ENCODE measurements at regions of chr19 and their contacts with region 1.

Region 1: GRCh38 chr19:18401580-18402112 is 4.2 kb upstream of the LRRC25 start:
- DNase-seq: peak; percentile 39 to 85 (median 56)
- ATAC-seq: peak; percentile 94
- H3K4me3 ChIP-seq: no peak overlapping the region
- H3K27ac ChIP-seq: peak overlapping the region; percentile 52; the same call in 1 of the 3 replicates
- H3K4me1 ChIP-seq: peaks cover 12 to 21% of the 10 kb centered on the region in 2 experiments
- H3K27me3 ChIP-seq: no peaks in the 10 kb centered on the region
- CTCF ChIP-seq: peak; percentile 69 to 77 (median 71)
- EP300 ChIP-seq: no peak
- POLR2A ChIP-seq: no peak
- RAD21 ChIP-seq: peak; percentile 58 to 61

Region 2: GRCh38 chr19:18160971-18161635 is 240.5 kb before region 1 on chr19:
- CTCF ChIA-PET with region 1: no interaction called
- POLR2A ChIA-PET with region 1: no interaction called
- in situ Hi-C with region 1: no loop called
- intact Hi-C with region 1: no loop called
- DNase-seq: peak; percentile 85 to 95 (median 95)
- ATAC-seq: peak; percentile 85
- H3K4me3 ChIP-seq: peak overlapping the region; percentile 40
- H3K27ac ChIP-seq: peak overlapping the region; percentile 84
- H3K4me1 ChIP-seq: peaks cover 32 to 50% of the 10 kb centered on the region in 2 experiments
- H3K27me3 ChIP-seq: no peaks in the 10 kb centered on the region
- CTCF ChIP-seq: peak; percentile 15 to 96 (median 88); a peak in 4 of 6 replicates
- EP300 ChIP-seq: no peak
- POLR2A ChIP-seq: no peak; the same call in none of the 2 replicates
- RAD21 ChIP-seq: peak in 1 of 2 experiments; percentile 65; a peak in 2 of 4 replicates

Region 3: DNA sequence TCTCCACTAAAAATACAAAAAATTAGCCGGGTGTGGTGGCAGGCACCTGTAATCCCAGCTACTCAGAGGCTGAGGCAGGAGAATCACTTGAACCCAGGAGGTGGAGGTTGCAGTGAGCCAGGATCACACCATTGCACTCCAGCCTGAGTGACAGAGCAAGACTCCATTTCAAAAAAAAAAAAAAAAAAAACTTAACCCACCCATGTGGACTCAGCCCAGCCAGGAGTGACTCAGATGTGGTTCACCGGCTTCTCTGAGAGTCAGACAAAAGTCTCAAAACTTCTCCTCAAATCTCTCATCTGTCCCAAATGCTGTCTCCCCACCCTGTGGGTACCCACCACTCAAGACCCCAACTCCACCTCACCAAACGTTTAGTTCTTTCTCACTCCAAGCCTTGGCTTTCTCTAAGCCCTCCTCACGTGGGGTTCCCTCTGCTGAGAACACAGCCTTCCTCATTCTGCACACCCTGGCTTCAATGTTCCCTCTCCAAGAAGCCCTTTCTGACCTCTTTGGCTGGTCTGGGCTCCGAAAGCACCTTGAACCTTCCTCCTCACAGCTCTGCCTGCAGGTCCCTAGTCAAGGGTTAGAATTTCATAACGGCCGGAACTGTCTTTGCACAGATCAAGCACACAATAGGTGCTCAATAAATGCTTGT is 186.7 kb before region 1 on chr19:
- CTCF ChIA-PET with region 1: no interaction called
- POLR2A ChIA-PET with region 1: no interaction called
- in situ Hi-C with region 1: loop called (anchors 5 kb)
- intact Hi-C with region 1: no loop called
- DNase-seq: no peak
- ATAC-seq: peak; percentile 58
- H3K4me3 ChIP-seq: no peak overlapping the region
- H3K27ac ChIP-seq: no peak overlapping the region
- H3K4me1 ChIP-seq: peaks cover 3 to 17% of the 10 kb centered on the region in 2 experiments; a peak in 3 of 5 replicates
- H3K27me3 ChIP-seq: no peaks in the 10 kb centered on the region; a peak in 1 of 5 replicates
- CTCF ChIP-seq: no peak
- EP300 ChIP-seq: no peak
- POLR2A ChIP-seq: no peak
- RAD21 ChIP-seq: no peak

Measured in K562 (cell line).